Activated T-helper 2 cell treated with anti-CD3 and anti-CD28 coated beads, Interferon-gamma antibody, Interleukin-2, Interleukin-4, amounts not matched to agents 10 μg/mL and 5 μg/mL and 100 μg/mL, durations not matched to agents 14 hours and 24 hours and 36 hours (primary cell): ENCODE measurements at regions of chr5 and their contacts with region 1.

Region 1: DNA sequence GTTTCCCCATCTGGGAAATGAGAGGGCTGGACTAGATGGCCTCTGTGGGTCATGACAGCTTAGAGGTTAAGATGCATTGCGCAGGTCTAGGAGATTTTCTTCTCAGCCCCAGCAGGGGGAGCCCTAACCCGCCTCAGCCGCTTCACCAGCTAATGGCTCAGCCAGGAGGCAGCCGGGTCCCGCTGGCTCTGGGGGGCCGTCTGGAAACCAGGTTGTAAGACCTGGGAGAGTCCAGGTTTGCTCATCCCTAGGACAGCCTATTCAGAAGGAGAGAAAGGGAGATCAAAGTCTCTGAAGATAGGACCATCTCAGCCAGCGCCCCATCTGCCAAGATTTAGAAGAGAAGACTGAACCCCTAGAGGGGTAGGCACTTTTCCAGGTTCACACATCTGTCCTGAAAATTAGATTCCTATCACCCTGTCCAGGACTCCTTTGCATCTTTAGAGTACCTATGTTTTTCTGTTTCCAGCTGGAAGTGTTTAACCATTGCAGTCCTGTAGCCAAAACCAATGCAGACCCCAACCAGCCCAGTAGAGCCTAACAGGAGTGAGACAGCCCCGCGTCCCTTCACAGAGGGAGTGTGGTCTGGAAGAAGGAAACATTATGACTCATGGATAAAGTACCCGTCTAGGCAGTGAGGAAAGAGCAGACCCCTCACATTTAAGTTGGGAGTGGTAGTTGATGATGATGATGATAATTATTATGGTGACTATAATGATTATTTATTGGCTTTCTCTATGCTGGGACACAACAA is 27.5 kb downstream of the SPARC start:
- DNase-seq: peak; percentile 60
- H3K4me3 Mint-ChIP-seq: no peak overlapping the region
- H3K27ac Mint-ChIP-seq: no peak overlapping the region
- H3K4me1 Mint-ChIP-seq: peaks cover 10% of the 10 kb centered on the region
- H3K27me3 Mint-ChIP-seq: peaks cover 18% of the 10 kb centered on the region

Region 2: GRCh38 chr5:151740336-151740942 is 81.3 kb after region 1 on chr5:
- intact Hi-C with region 1: loop called (anchors 1 kb)
- DNase-seq: peak; percentile 26
- H3K4me3 Mint-ChIP-seq: no peak overlapping the region
- H3K27ac Mint-ChIP-seq: no peak overlapping the region
- H3K4me1 Mint-ChIP-seq: peaks cover 16% of the 10 kb centered on the region
- H3K27me3 Mint-ChIP-seq: no peaks in the 10 kb centered on the region

Region 3: GRCh38 chr5:151758430-151759241 is 99.5 kb after region 1 on chr5 and contains the start of gene ATOX1:
- intact Hi-C with region 1: loop called (anchors 5 kb)
- DNase-seq: peak; percentile 87
- H3K4me3 Mint-ChIP-seq: peak within 1 kb of the TSS; percentile 92
- H3K27ac Mint-ChIP-seq: peak within 1 kb of the TSS; percentile 85
- H3K4me1 Mint-ChIP-seq: peaks cover 32% of the 10 kb centered on the region
- H3K27me3 Mint-ChIP-seq: peaks cover 4% of the 10 kb centered on the region
- total RNA-seq, gene ATOX1: 69.8 and 82.8 TPM in 2 replicates

Region 4: GRCh38 chr5:152142840-152143469 is 483.8 kb after region 1 on chr5:
- intact Hi-C with region 1: loop called (anchors 5 kb)
- DNase-seq: peak; percentile 17
- H3K4me3 Mint-ChIP-seq: no peak overlapping the region
- H3K27ac Mint-ChIP-seq: no peak overlapping the region
- H3K4me1 Mint-ChIP-seq: no peaks in the 10 kb centered on the region
- H3K27me3 Mint-ChIP-seq: no peaks in the 10 kb centered on the region

Region 5: GRCh38 chr5:152349683-152350526 is 690.7 kb after region 1 on chr5:
- intact Hi-C with region 1: loop called (anchors 5 kb)
- DNase-seq: no peak
- H3K4me3 Mint-ChIP-seq: no peak overlapping the region
- H3K27ac Mint-ChIP-seq: no peak overlapping the region
- H3K4me1 Mint-ChIP-seq: no peaks in the 10 kb centered on the region
- H3K27me3 Mint-ChIP-seq: no peaks in the 10 kb centered on the region